Calu3 (cell line): ENCODE measurements at regions of chr18 and their contacts with region 1.

Region 1: DNA sequence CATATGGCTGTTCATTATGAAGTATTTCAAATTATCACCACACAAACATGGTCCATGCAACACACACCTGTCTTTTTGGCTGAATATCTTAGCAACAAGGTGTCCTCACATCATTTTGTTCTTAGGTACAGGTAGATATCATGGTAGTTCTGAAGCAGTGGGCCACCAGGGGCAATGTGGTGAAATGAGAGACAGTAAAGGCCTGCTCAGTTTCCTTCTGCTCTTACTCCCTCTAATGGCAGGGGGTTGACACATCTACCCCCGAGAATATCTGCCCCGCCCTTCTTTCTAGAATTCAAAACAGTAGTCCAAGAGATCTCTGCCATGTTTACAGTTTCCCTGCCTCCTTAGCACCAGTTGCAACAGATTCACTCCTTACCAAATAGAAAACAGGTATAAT is 147.0 kb upstream of the KLHL14 start:
- DNase-seq: peak; percentile 63
- H3K4me3 Mint-ChIP-seq: no peak overlapping the region
- H3K27ac Mint-ChIP-seq: no peak overlapping the region
- H3K4me1 Mint-ChIP-seq: peaks cover 10% of the 10 kb centered on the region
- H3K27me3 Mint-ChIP-seq: no peaks in the 10 kb centered on the region
- CTCF ChIP-seq: peak; percentile 52

Region 2: DNA sequence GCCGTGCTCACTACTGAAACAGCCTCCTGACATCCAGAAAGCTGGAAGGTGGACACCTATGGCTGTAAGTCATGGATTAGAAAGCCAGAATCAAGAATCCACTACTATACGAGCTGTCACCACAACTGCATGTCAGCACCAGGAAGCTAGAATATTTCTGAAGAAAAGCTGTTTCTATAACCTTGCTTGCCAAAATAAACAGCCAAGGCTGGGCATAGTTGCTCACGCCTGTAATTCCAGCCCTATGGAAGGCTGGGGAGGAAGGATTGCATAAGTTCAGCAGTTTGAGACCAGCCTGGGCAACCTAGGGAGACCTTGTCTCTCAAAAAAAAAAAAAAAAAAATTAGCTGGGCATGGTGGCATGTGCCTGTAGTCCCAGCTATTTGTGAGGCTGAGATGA is 352.8 kb before region 1 on chr18:
- CTCF ChIA-PET with region 1: no interaction called
- intact Hi-C with region 1: loop called (anchors 10 kb)
- DNase-seq: no peak
- H3K4me3 Mint-ChIP-seq: no peak overlapping the region
- H3K27ac Mint-ChIP-seq: no peak overlapping the region
- H3K4me1 Mint-ChIP-seq: no peaks in the 10 kb centered on the region
- H3K27me3 Mint-ChIP-seq: no peaks in the 10 kb centered on the region
- CTCF ChIP-seq: no peak

Region 3: GRCh38 chr18:32714571-32715148 is 205.1 kb before region 1 on chr18:
- CTCF ChIA-PET with region 1: no interaction called
- intact Hi-C with region 1: loop called (anchors 1 kb)
- DNase-seq: peak; percentile 61
- H3K4me3 Mint-ChIP-seq: no peak overlapping the region
- H3K27ac Mint-ChIP-seq: no peak overlapping the region
- H3K4me1 Mint-ChIP-seq: no peaks in the 10 kb centered on the region
- H3K27me3 Mint-ChIP-seq: no peaks in the 10 kb centered on the region
- CTCF ChIP-seq: peak; percentile 42